ENCODE measurements at regions of chr16 and their contacts with region 1.

Region 1: GRCh38 chr16:54286090-54286993 is at the start of gene IRX3:
- DNase-seq: peak; percentile 90 to 96 (median 93)
- ATAC-seq: peak; percentile 84 to 89
- H3K4me3 ChIP-seq: peak within 1 kb of the TSS; percentile 54
- H3K27ac ChIP-seq: peak within 1 kb of the TSS; percentile 25
- H3K4me1 ChIP-seq: no peaks in the 10 kb centered on the region
- H3K27me3 ChIP-seq: no peaks in the 10 kb centered on the region
- total RNA-seq, gene IRX3: 9.4 to 17.8 (median 16.0) TPM

Region 2: GRCh38 chr16:54193665-54194333 is 92.5 kb before region 1 on chr16:
- intact Hi-C with region 1: loop called in 1 of 4 experiments (anchors 10 kb)
- DNase-seq: peak; percentile 82 to 93 (median 92)
- ATAC-seq: peak; percentile 91 to 92
- H3K4me3 ChIP-seq: no peak overlapping the region
- H3K27ac ChIP-seq: peak overlapping the region; percentile 40
- H3K4me1 ChIP-seq: no peaks in the 10 kb centered on the region
- H3K27me3 ChIP-seq: no peaks in the 10 kb centered on the region

Region 3: GRCh38 chr16:54297154-54297553 is 10.8 kb after region 1 on chr16:
- intact Hi-C with region 1: no loop called
- DNase-seq: no peak
- ATAC-seq: no peak
- H3K4me3 ChIP-seq: no peak overlapping the region
- H3K27ac ChIP-seq: no peak overlapping the region
- H3K4me1 ChIP-seq: no peaks in the 10 kb centered on the region
- H3K27me3 ChIP-seq: no peaks in the 10 kb centered on the region

Region 4: DNA sequence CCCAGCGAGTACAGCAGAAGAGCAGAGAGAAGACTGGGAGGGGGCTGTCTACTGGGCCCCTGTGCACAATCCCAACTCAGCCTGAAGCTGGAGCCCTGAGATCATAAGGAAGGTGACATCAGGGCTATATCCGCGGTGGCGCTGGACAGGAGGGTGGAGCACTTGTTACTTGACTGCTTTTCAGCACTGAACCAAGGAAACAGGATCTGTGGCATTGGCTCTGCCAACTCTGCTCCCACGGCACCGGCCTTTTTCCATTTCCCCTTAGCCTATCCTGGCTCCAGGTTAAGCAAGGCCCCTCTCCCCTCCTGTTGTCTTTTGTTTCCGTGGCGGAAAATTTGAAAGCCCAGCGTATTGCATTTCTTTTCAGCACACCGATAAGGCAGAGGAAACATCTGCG is 125.2 kb after region 1 on chr16:
- intact Hi-C with region 1: loop called in 1 of 4 experiments (anchors 10 kb)
- DNase-seq: peak; percentile 55 to 82 (median 74)
- ATAC-seq: peak; percentile 79 to 87
- H3K4me3 ChIP-seq: no peak overlapping the region
- H3K27ac ChIP-seq: no peak overlapping the region
- H3K4me1 ChIP-seq: peaks cover 5% of the 10 kb centered on the region
- H3K27me3 ChIP-seq: no peaks in the 10 kb centered on the region

Region 5: DNA sequence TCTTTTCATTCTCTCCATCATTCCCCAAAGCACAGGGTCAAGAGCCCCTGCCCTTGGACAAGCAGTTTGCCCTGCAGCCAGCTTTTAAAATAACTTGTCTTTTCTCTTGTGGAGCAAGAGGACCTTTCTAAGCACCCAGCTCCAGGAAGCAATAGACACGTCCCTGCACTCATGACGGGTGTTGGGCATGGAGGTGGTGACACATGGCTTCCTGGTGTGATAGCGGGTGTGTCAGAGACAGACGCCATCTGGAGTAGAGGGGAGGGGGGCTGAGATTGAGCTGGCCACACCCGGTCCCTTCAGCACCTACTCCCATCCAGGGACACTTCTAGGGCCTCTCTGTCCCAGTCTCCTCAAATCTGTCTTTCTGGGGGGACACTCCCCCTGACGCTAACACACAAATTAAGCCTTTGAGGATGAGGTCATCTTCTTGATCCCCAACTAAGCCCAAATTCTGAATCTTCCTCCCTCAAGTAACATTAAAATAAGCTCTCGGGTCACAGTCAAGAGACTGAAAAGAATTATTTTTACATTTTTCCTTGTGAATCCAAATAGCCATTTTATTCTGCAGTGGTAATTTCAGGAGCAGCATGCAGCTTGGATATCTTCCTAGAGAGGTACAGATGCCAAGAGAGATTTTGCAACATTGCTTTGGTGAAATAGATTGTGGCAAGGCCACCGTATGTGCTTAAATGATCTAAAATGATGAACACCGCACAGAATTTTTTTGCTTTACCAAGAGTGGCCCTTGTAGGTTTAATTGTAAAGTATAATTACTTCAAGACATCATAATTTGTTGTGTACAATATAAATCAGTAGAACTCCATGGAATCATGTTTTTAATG is 216.9 kb after region 1 on chr16:
- intact Hi-C with region 1: loop called in 1 of 4 experiments (anchors 10 kb)
- DNase-seq: peak; percentile 76 to 88 (median 85)
- ATAC-seq: peak; percentile 84 to 92
- H3K4me3 ChIP-seq: no peak overlapping the region
- H3K27ac ChIP-seq: no peak overlapping the region
- H3K4me1 ChIP-seq: peaks cover 4% of the 10 kb centered on the region
- H3K27me3 ChIP-seq: no peaks in the 10 kb centered on the region

Region 6: DNA sequence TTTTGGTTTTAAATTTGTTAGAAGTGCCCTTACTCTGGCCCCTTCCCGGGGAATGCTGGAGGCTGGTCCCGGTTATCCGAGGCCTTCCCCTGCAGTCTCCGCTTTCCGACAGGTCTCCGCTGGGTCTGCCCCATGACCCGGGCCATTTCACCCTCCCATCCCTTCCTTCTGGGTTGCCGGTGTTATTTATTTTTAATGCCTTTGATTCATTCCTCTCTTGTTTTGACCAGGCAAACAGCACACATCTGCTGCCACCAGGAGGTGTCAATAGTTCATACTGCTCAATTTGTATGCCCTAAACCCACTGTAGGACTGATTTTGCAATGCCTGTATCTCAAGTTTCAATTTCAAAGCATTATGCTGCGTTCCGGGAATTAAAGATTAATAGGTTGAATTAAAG is 531.1 kb after region 1 on chr16:
- intact Hi-C with region 1: loop called in 1 of 4 experiments (anchors 5 kb)
- DNase-seq: no peak
- ATAC-seq: no peak
- H3K4me3 ChIP-seq: no peak overlapping the region
- H3K27ac ChIP-seq: no peak overlapping the region
- H3K4me1 ChIP-seq: no peaks in the 10 kb centered on the region
- H3K27me3 ChIP-seq: no peaks in the 10 kb centered on the region

Region 7: DNA sequence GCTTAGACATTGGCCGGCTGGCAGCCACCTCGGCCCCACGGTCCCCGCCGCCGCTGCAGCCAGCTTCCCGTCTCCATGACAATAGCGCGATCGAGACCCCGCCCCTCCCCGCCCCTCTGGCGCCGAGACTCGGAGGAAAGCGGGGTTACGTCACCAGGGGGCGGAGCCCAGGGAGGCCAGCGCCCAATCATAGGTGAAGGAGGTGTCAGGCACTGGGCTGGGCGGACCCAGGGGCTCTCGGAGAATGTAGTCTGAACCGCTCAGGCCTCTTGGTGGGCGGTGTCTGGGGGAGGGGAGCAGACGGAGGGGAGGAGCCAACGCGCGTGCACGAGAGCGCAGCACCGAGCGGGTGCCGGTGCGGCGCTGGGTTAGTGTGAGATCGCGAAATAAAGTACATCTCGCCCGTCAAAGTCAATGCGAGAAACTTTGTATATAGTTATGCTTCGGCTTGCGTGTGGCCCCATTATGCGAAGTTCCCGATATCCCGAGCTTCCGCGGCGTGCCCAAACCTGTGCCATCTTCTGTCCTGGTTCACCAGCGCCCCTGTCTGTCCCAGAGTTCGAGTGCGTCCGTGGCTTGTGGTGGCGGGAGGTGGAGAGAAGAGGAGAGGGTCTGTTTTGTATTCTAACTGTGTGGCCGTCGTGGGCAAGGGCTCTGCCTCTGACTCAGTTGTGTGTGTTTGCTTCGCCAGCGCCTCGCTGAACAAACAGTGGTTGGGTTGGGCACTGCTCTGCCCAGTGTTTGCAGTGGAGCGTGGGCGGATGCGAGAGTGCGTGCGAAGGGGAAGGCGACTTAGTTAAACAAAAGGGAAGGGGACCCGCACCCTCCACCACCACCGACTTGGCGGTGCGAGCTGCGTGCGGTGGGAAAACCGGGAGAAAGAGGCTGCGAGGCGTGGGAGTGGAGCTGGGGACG is 643.0 kb after region 1 on chr16:
- intact Hi-C with region 1: loop called in 2 of 4 experiments (anchors 5 to 10 kb)
- DNase-seq: peak; percentile 100
- ATAC-seq: peak; percentile 97 to 98
- H3K4me3 ChIP-seq: peak overlapping the region; percentile 87
- H3K27ac ChIP-seq: no peak overlapping the region
- H3K4me1 ChIP-seq: no peaks in the 10 kb centered on the region
- H3K27me3 ChIP-seq: no peaks in the 10 kb centered on the region